ENCODE measurements at regions of chr1 and their contacts with region 1.

Region 1: GRCh38 chr1:239814303-239814881 is 277.3 kb upstream of the FMN2 start:
- DNase-seq: peak; percentile 68
- H3K4me3 Mint-ChIP-seq: no peak overlapping the region
- H3K27ac Mint-ChIP-seq: no peak overlapping the region
- H3K4me1 Mint-ChIP-seq: peaks cover 29% of the 10 kb centered on the region
- H3K27me3 Mint-ChIP-seq: no peaks in the 10 kb centered on the region

Region 2: DNA sequence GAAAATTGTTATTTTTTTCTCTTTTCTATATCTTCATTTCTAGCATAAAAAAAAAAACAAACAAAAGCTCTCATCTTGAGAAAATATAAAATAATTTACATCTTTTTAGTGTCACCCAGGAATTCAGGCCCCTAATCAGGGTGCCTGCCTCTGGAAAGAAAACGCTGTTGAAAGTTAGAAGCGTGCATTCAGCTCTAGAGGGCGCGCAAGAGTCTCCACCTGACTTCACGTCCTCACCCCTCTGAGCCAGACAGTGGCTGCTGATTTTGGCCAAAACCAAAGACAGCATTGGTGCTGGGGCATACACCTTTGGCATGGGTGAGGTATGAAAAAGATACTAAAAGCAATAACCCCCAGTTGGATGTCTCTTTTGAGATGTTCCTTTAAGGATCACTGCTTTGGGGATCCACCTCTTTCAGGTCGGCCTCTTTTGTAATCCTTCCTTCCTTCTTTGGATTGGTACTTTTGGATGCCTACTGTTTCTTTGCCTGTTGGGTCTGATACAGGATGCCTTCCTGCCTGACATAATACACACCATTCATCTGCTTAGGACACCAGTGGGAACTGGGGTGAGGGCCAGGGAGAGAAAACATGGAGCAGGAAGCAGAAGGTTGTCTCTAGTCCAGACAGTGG is 505.6 kb before region 1 on chr1:
- CTCF ChIA-PET with region 1: no interaction called
- intact Hi-C with region 1: loop called (anchors 5 kb)
- DNase-seq: peak; percentile 54
- H3K4me3 Mint-ChIP-seq: no peak overlapping the region
- H3K27ac Mint-ChIP-seq: no peak overlapping the region
- H3K4me1 Mint-ChIP-seq: no peaks in the 10 kb centered on the region
- H3K27me3 Mint-ChIP-seq: peaks cover 4% of the 10 kb centered on the region

Region 3: GRCh38 chr1:239587066-239587465 is 227.3 kb before region 1 on chr1:
- CTCF ChIA-PET with region 1: no interaction called
- intact Hi-C with region 1: loop called (anchors 5 kb)
- DNase-seq: peak; percentile 36
- H3K4me3 Mint-ChIP-seq: no peak overlapping the region
- H3K27ac Mint-ChIP-seq: no peak overlapping the region
- H3K4me1 Mint-ChIP-seq: peaks cover 7% of the 10 kb centered on the region
- H3K27me3 Mint-ChIP-seq: no peaks in the 10 kb centered on the region

Region 4: DNA sequence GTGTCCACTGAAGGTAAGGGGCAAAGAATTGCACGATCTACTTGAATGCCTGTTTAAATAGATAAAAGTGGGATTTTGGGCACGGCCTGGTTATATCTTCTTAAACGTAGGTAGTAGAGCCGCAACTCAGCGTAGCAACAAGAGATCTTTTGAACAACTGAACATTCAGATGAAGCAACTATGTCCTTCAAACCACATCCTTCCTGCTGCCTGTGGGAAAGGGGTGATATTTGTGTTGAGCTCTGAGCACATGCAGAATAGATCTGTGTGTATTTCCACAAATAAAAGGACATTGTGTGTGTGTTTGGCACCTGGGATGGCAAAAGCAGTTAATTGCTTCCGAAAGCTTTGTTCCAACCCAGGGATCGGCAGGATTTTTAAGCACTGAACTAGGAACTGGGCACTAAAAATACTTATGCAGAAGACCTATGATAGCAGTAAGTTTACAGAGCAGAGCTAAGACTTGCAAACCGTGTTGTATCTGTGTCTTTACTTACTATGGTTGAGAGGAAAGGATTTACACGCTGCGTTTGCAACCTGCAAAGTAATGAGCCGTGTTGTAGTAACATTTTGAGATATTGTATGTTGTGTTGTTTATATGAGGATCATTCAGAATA is 94.6 kb before region 1 on chr1:
- CTCF ChIA-PET with region 1: no interaction called
- intact Hi-C with region 1: loop called (anchors 1 kb)
- DNase-seq: peak; percentile 74
- H3K4me3 Mint-ChIP-seq: peak overlapping the region; percentile 91
- H3K27ac Mint-ChIP-seq: peak overlapping the region; percentile 97
- H3K4me1 Mint-ChIP-seq: peaks cover 41% of the 10 kb centered on the region
- H3K27me3 Mint-ChIP-seq: no peaks in the 10 kb centered on the region

Region 5: GRCh38 chr1:239858058-239858457 is 43.7 kb after region 1 on chr1:
- CTCF ChIA-PET with region 1: no interaction called
- intact Hi-C with region 1: no loop called
- DNase-seq: no peak
- H3K4me3 Mint-ChIP-seq: no peak overlapping the region
- H3K27ac Mint-ChIP-seq: no peak overlapping the region
- H3K4me1 Mint-ChIP-seq: no peaks in the 10 kb centered on the region
- H3K27me3 Mint-ChIP-seq: no peaks in the 10 kb centered on the region

Region 6: DNA sequence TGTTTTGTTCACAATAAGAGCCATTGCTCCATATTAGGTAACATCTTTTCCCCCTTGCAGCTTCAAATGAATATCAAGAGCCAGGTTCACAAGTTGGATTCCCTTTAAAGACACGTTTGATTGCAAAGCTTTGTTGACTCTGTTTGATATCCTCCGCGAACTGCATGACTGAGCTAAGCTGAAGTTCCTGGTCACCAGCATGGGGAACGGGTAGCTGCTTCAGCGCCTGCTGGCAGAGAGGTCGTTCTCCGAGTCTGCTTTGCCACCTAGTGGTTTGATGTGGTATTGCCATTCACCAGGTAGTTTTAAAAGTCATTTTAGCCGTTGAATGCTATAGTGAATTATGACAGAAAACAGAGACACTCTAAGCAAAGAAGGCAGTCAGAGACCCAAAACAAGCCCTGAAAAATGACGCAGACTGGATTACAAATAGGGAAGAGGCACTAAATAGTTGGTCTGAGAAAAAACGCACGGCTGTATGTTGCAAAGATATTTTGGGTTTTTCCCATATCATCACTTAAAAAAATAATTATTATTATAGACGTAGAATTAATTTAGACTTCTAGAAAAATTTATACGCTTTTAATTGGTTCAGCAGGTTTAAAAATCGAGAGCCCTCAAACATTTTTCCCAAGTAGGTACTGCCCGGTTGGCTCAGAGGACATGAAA is 83.8 kb after region 1 on chr1:
- CTCF ChIA-PET with region 1: interaction called, 6 read pairs
- intact Hi-C with region 1: loop called (anchors 5 kb)
- DNase-seq: peak; percentile 86
- H3K4me3 Mint-ChIP-seq: no peak overlapping the region
- H3K27ac Mint-ChIP-seq: no peak overlapping the region
- H3K4me1 Mint-ChIP-seq: peaks cover 2% of the 10 kb centered on the region
- H3K27me3 Mint-ChIP-seq: no peaks in the 10 kb centered on the region

Region 7: DNA sequence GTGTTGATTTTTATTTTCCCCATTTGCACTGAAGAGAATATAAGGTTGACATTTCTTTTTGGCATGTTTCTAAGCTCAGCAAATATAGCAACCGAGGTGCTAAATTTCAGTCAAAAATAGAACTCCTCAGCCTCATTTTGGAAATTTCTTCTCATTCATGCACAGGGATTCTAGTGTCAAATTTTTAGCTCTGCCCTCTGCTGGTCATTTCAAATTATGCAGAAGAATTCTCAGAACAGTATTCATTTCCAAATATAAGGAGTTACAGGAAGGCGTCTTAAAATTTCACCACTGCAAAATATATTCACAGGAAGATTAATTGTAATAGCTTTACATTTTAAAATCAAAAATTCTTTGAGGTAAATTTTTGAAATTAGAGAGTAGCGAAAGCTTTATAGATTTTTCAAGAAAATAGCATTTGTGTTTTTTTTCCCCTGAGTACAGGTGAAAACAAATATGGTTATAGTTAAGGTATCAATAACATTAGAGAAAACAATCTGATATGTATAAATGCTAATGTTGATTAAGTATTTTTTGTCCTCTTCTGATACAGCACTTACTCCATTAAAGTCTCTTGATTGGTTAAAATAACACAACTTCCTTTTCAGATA is 335.2 kb after region 1 on chr1:
- CTCF ChIA-PET with region 1: no interaction called
- intact Hi-C with region 1: no loop called
- DNase-seq: no peak
- H3K4me3 Mint-ChIP-seq: no peak overlapping the region
- H3K27ac Mint-ChIP-seq: no peak overlapping the region
- H3K4me1 Mint-ChIP-seq: no peaks in the 10 kb centered on the region
- H3K27me3 Mint-ChIP-seq: peaks cover 8% of the 10 kb centered on the region